BJ (cell line): ENCODE measurements at regions of chr12 and their contacts with region 1.

Region 1: GRCh38 chr12:45990468-45991283 is at the start of gene SCAF11:
- DNase-seq: peak; percentile 99
- H3K4me3 ChIP-seq: peak within 1 kb of the TSS; percentile 69
- H3K27me3 ChIP-seq: no peaks in the 10 kb centered on the region
- CTCF ChIP-seq: peak; percentile 97
- polyA plus RNA-seq, gene SCAF11: 25.2 and 65.0 TPM in 2 replicates

Region 2: GRCh38 chr12:45781065-45781464 is 209.6 kb before region 1 on chr12:
- CTCF ChIA-PET with region 1: no interaction called
- POLR2A ChIA-PET with region 1: no interaction called
- DNase-seq: no peak
- H3K4me3 ChIP-seq: no peak overlapping the region
- H3K27me3 ChIP-seq: no peaks in the 10 kb centered on the region
- CTCF ChIP-seq: no peak

Region 3: DNA sequence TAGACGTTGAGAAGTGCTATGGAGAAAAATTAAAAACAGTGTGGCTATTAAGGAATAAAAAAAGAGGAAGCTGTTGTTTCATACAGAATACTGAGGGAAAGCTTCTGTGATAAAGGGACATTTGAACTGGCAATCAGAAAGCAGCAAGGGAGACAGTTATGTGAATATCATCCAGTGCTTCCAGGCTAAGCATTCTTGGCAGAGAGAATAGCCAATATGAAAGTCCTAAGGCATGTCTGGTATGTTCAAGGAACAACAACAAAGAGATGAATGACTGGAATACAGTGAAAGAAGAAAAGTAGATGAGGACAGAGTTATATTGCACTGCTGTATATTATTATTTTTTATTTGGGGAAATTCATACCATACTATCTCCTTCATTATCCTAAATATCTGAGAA is 24.2 kb before region 1 on chr12:
- CTCF ChIA-PET with region 1: interaction called, 15 read pairs
- POLR2A ChIA-PET with region 1: no interaction called
- DNase-seq: peak; percentile 35
- H3K4me3 ChIP-seq: no peak overlapping the region
- H3K27me3 ChIP-seq: no peaks in the 10 kb centered on the region
- CTCF ChIP-seq: no peak

Region 4: GRCh38 chr12:46049665-46050064 is 59.0 kb after region 1 on chr12:
- CTCF ChIA-PET with region 1: no interaction called
- POLR2A ChIA-PET with region 1: no interaction called
- DNase-seq: no peak
- H3K4me3 ChIP-seq: no peak overlapping the region
- H3K27me3 ChIP-seq: no peaks in the 10 kb centered on the region
- CTCF ChIP-seq: no peak